ENCODE measurements at regions of chr2 and their contacts with region 1.

Region 1: DNA sequence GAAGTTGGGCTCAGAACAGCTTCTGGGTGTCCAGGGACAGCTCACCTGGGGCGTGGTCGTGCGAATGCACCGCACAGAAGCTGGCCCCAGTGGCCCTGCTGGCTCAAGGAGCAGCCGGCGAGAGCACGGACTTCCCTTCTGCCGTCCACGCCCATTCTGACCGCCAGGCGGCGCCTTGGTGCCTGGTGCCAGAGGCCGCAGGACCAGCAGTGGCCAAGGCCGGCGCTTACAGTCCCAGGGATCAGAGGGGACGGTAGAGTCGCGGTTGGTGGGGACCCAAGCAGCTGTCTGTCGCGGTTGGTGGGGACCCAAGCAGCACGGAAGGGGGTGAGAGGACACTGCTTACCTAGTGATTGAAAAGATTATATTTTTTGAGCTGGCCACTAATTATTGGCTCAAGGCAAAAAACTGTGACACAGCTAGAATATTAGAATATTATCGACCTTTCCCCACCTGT is 25.7 kb downstream of the NPPC start:
- DNase-seq: peak; percentile 70
- H3K4me3 Mint-ChIP-seq: no peak overlapping the region
- H3K27ac Mint-ChIP-seq: no peak overlapping the region
- H3K4me1 Mint-ChIP-seq: no peaks in the 10 kb centered on the region
- H3K27me3 Mint-ChIP-seq: peaks cover 3% of the 10 kb centered on the region

Region 2: GRCh38 chr2:231925303-231926179 is 25.0 kb after region 1 on chr2:
- CTCF ChIA-PET with region 1: interaction called, 12 read pairs
- POLR2A ChIA-PET with region 1: no interaction called
- intact Hi-C with region 1: no loop called
- DNase-seq: peak; percentile 75
- H3K4me3 Mint-ChIP-seq: peak overlapping the region; percentile 26
- H3K27ac Mint-ChIP-seq: no peak overlapping the region
- H3K4me1 Mint-ChIP-seq: peaks cover 10% of the 10 kb centered on the region
- H3K27me3 Mint-ChIP-seq: peaks cover 54% of the 10 kb centered on the region

Region 3: DNA sequence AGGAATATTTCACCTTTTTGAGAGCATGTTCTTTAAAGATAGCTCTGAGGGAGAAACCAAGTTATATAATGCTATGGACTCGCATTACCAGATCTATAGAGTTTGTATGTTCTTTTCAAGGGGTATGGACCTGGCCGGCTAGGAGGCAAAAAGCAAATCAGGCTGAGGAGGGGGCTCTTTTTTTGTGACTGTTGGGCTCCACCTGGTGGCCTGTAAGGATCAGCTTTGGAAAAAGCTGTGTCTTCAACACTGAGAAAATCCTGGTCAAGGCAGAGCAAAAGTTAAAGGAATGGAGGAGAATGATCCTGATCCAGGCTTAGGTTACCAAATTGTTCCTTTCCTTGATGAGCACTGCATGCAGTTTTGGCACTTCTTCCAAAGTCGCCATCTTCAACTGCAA is 241.5 kb after region 1 on chr2:
- CTCF ChIA-PET with region 1: interaction called, 33 read pairs
- POLR2A ChIA-PET with region 1: no interaction called
- intact Hi-C with region 1: no loop called
- DNase-seq: peak; percentile 50
- H3K4me3 Mint-ChIP-seq: no peak overlapping the region
- H3K27ac Mint-ChIP-seq: no peak overlapping the region
- H3K4me1 Mint-ChIP-seq: peaks cover 19% of the 10 kb centered on the region
- H3K27me3 Mint-ChIP-seq: no peaks in the 10 kb centered on the region

Region 4: GRCh38 chr2:232230557-232230956 is 330.0 kb after region 1 on chr2:
- CTCF ChIA-PET with region 1: interaction called, 9 read pairs
- POLR2A ChIA-PET with region 1: no interaction called
- intact Hi-C with region 1: loop called (anchors 5 kb)
- DNase-seq: peak; percentile 46
- H3K4me3 Mint-ChIP-seq: no peak overlapping the region
- H3K27ac Mint-ChIP-seq: no peak overlapping the region
- H3K4me1 Mint-ChIP-seq: peaks cover 11% of the 10 kb centered on the region
- H3K27me3 Mint-ChIP-seq: no peaks in the 10 kb centered on the region

Region 5: DNA sequence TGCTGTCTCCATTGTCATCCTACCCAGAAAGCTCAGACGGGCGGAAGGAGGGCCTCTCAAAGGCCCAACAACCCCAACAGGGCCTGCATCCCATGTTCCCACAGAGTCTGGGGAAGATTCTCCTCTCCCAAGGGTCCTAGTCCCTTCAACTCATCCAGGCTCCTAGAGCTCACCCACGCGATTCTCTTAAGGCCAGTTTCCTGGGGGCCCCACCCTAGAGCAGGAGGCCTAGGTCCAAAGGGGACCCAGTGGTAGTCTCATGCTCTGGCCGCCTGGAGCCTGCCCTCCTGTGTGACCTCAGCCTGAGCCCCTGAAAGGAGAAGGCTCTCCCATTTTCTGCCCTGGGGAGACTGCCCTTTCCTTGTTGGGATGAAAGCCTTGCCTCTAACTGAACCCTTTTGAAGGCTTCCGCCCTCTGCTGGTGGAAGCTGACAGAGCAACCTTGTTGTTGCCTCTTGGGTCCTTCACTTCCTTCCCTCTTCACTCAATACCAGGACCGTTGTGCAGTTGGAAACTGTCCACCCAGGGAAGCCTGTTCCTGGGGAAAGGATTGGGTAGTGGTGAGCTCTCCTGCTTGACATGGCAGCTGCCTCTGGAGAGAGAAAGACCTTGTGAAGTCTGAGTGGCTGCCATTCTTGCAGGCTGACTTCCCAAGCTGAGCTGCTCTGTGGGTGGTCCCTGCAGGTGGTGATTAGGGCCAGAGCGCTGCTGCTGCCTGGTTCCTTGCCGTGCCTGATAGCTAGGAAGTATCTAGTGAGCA is 392.1 kb after region 1 on chr2:
- CTCF ChIA-PET with region 1: interaction called, 21 read pairs
- POLR2A ChIA-PET with region 1: no interaction called
- intact Hi-C with region 1: no loop called
- DNase-seq: peak; percentile 73
- H3K4me3 Mint-ChIP-seq: no peak overlapping the region
- H3K27ac Mint-ChIP-seq: no peak overlapping the region
- H3K4me1 Mint-ChIP-seq: no peaks in the 10 kb centered on the region
- H3K27me3 Mint-ChIP-seq: no peaks in the 10 kb centered on the region

Region 6: GRCh38 chr2:232521959-232522622 is 621.6 kb after region 1 on chr2:
- CTCF ChIA-PET with region 1: no interaction called
- POLR2A ChIA-PET with region 1: no interaction called
- intact Hi-C with region 1: loop called (anchors 10 kb)
- DNase-seq: peak; percentile 68
- H3K4me3 Mint-ChIP-seq: no peak overlapping the region
- H3K27ac Mint-ChIP-seq: no peak overlapping the region
- H3K4me1 Mint-ChIP-seq: peaks cover 10% of the 10 kb centered on the region
- H3K27me3 Mint-ChIP-seq: peaks cover 38% of the 10 kb centered on the region

Measured in activated CD4-positive, alpha-beta memory T cell treated with anti-CD3 and anti-CD28 coated beads for 36 hours (primary cell).